Right ventricle myocardium inferior (tissue), 1 donor: ENCODE measurements at regions of chr13 and their contacts with region 1.

Region 1: DNA sequence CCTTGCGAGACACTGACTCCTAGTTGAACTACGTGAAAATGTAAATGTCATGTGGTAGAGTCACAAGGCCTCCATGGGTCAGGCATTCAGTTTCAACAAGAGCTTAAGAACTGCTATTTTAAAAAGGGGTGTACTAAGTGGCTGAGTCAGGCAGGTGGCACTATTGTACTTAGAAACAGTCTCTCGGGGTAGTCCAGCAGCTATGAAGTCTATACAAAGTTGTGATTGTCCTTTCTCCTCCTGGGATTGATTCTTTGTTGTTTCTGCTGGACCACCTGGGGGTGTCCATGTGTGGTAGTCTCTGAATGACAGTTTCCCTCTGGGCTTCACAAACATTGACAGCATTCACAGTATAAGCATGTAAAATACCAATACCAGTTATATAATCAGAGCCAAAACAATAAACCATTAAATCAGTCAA is 33.0 kb downstream of the UGGT2 start:
- DNase-seq: no peak
- ATAC-seq: peak; percentile 79

Region 2: DNA sequence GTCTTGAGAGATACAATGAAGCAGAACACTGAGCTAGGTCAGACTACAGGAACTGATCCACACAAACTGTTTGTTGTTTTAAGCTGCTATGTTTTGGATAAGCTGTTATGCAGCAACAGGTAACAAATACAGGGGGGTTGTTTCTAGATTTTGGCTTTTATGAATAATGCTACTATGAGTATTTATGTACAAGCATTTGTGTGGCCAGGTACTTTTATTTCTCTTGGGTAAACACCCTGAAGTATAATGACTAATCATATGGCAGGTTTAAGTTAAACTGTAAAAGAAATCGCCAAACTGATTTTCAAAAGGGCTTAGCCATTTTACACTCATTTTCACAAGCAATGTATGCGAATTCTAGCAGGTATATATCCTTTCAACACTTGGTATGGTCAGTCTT is 177.3 kb before region 1 on chr13:
- intact Hi-C with region 1: no loop called
- DNase-seq: no peak
- ATAC-seq: no peak

Region 3: DNA sequence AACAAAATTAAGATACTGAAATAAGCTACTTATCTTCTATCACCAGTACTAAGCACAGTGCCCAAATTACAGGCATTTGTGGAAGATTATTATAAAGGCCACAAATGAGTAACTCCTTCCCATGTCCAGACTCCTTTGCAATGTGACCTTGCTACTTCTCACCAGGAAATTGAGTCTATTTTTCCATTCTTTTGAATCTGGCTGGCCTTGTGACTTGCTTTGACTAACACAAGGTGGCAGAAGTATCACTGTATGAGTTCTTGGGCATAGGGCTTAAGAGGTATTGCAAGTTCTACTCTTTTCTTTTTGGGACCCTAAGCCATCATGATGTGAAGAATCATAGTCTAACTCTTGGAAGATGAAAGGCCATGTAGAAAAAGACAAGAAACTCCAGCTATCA is 16.9 kb before region 1 on chr13:
- intact Hi-C with region 1: no loop called
- DNase-seq: no peak
- ATAC-seq: no peak

Region 4: GRCh38 chr13:96229356-96229755 is 209.2 kb after region 1 on chr13:
- intact Hi-C with region 1: loop called (anchors 2 kb)
- DNase-seq: no peak
- ATAC-seq: no peak

Region 5: DNA sequence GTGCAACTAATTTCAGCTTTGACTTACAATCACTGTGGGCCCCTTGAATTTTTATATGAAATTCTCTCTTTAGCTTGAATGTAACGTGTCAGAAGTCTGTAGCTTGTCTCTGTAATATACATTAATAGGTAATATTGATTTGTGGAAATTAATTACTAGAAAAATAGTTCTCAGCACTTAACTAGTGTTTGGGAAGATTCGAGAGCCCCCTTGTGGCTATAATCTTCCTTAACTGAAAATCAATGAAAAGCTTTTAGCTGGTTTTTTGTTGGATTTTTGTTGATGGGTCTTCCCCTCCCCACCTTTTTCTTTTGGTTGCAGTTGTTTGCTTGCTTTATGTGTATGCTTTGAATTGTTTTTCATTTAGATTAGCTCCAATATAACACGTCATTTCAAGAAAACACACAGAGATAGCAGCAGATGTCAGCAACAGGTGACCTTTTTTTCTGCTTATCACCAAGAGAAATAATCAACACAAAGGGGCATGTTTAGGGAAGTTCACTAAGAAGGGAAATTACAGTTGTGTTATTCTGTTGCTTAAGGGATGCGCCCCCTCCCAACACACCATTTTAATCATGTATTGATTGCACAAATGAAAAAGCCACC is 797.3 kb after region 1 on chr13:
- intact Hi-C with region 1: loop called (anchors 5 kb)
- DNase-seq: no peak
- ATAC-seq: no peak

Region 6: GRCh38 chr13:96958286-96958891 is 938.2 kb after region 1 on chr13:
- intact Hi-C with region 1: loop called (anchors 2 kb)
- DNase-seq: no peak
- ATAC-seq: no peak